ENCODE measurements at regions of chr3 and their contacts with region 1.

Region 1: DNA sequence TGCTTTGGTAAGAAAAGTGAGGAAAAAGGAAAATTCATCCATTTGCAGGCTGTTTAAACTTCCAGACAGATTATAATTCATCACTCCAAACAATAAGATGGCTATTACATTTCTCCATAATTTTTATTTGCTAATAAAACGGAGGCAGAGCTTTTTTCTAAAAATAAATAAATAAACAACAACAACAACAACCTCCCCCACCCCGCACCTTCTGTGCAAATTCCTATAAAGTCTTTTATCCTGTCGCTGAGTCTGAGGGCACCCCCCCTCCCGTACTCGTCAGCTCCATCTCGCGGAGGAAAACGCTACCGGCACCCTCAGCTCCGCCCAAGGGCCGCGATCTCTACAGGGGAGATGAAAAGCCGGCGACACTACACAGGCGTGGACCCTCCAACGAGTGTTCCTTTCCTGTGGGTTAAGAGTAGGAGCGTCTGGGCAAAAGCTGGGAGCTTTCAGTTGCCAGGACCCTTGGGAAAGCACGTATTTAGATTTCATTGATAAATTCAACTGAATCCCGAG is 1.0 kb upstream of the ATP1B3 start:
- DNase-seq: peak; percentile 69
- ATAC-seq: peak; percentile 80
- H3K4me3 ChIP-seq: peak overlapping the region; percentile 67 to 96
- H3K27ac ChIP-seq: peak overlapping the region; percentile 91
- H3K4me1 ChIP-seq: peaks cover 12 to 28% of the 10 kb centered on the region in 2 experiments
- H3K27me3 ChIP-seq: no peaks in the 10 kb centered on the region
- CTCF ChIP-seq: peak; percentile 77 to 89 (median 80)
- POLR2A ChIP-seq: no peak
- RAD21 ChIP-seq: peak; percentile 67

Region 2: DNA sequence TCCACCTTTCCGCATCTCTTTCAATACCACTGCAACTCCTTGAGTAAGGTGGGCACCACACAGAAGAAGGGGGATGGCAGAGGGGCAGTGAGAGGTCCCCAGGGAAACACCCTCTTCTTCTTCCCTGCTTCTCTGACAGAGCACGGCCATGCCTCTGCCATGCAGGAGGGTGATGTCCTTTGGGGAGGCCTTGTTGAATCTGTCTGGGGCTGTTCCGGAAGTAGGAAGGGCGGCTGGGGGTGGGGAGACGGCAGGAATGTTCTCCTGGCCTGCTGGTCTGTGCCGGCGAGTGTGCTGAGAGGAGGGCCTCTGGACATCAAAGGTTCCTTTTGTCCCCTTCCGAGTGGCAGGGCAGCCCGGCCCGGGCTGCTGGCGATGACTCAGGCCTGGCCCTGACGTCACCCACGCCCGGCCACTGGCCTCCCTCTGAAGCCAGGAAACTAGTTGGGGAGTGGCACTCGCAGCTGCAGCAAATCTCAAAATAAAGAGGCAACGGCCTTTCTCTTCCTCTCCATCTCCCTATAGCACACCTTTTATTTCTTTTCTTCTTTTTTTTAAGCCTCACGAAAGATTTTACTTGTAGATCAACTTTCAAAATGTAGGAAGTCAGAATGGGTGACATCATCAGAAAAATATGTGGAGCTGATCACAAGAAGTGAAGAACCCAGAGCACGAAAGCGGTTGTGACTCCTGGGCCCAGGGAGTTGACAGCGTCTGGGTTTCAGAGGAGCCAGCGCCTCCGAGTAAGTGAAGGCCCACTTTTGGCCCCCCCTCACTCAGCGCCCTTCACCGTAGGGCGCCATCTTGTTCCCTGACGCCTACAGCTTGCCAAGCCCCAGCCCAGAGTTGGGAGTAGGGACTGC is 507.1 kb before region 1 on chr3 and contains the start of gene ZBTB38:
- CTCF ChIA-PET with region 1: no interaction called
- POLR2A ChIA-PET with region 1: no interaction called
- RAD21 ChIA-PET with region 1: no interaction called
- intact Hi-C with region 1: loop called (anchors 5 kb)
- DNase-seq: peak; percentile 95
- ATAC-seq: peak; percentile 89
- H3K4me3 ChIP-seq: peak within 1 kb of the TSS; percentile 33 to 45
- H3K27ac ChIP-seq: peak within 1 kb of the TSS; percentile 89
- H3K4me1 ChIP-seq: peaks cover 42 to 52% of the 10 kb centered on the region in 2 experiments
- H3K27me3 ChIP-seq: no peaks in the 10 kb centered on the region
- CTCF ChIP-seq: no peak
- POLR2A ChIP-seq: peak; percentile 26
- RAD21 ChIP-seq: no peak
- total RNA-seq, gene ZBTB38: 33.5 TPM

Region 3: GRCh38 chr3:142578327-142579223 is 703.1 kb after region 1 on chr3 and contains the start of gene ATR:
- CTCF ChIA-PET with region 1: no interaction called
- POLR2A ChIA-PET with region 1: no interaction called
- RAD21 ChIA-PET with region 1: no interaction called
- intact Hi-C with region 1: no loop called
- DNase-seq: peak; percentile 84
- ATAC-seq: peak; percentile 96
- H3K4me3 ChIP-seq: peak within 1 kb of the TSS; percentile 82 to 83
- H3K27ac ChIP-seq: peak within 1 kb of the TSS; percentile 70
- H3K4me1 ChIP-seq: peaks cover 5 to 18% of the 10 kb centered on the region in 2 experiments; a peak in 3 of 4 replicates
- H3K27me3 ChIP-seq: no peaks in the 10 kb centered on the region
- CTCF ChIP-seq: no peak
- POLR2A ChIP-seq: peak; percentile 70
- RAD21 ChIP-seq: no peak; the same call in 1 of the 2 replicates
- total RNA-seq, gene ATR: 24.7 TPM

Region 4: GRCh38 chr3:142817897-142818296 is 942.5 kb after region 1 on chr3:
- CTCF ChIA-PET with region 1: no interaction called
- POLR2A ChIA-PET with region 1: no interaction called
- RAD21 ChIA-PET with region 1: no interaction called
- intact Hi-C with region 1: no loop called
- DNase-seq: no peak
- ATAC-seq: no peak
- H3K4me3 ChIP-seq: no peak overlapping the region
- H3K27ac ChIP-seq: no peak overlapping the region
- H3K4me1 ChIP-seq: no peaks in the 10 kb centered on the region
- H3K27me3 ChIP-seq: no peaks in the 10 kb centered on the region
- CTCF ChIP-seq: no peak
- POLR2A ChIP-seq: no peak
- RAD21 ChIP-seq: no peak

Measured in HCT116 (cell line).